Prostate gland (tissue), 2 donors: ENCODE measurements at regions of chr16 and their contacts with region 1.

Region 1: GRCh38 chr16:28946681-28947080 is 4.1 kb upstream of the NFATC2IP start:
- DNase-seq: no peak
- H3K4me3 ChIP-seq: no peak overlapping the region
- H3K27ac ChIP-seq: no peak overlapping the region
- H3K4me1 ChIP-seq: no peaks in the 10 kb centered on the region
- H3K27me3 ChIP-seq: no peaks in the 10 kb centered on the region
- CTCF ChIP-seq: no peak
- POLR2A ChIP-seq: no peak

Region 2: DNA sequence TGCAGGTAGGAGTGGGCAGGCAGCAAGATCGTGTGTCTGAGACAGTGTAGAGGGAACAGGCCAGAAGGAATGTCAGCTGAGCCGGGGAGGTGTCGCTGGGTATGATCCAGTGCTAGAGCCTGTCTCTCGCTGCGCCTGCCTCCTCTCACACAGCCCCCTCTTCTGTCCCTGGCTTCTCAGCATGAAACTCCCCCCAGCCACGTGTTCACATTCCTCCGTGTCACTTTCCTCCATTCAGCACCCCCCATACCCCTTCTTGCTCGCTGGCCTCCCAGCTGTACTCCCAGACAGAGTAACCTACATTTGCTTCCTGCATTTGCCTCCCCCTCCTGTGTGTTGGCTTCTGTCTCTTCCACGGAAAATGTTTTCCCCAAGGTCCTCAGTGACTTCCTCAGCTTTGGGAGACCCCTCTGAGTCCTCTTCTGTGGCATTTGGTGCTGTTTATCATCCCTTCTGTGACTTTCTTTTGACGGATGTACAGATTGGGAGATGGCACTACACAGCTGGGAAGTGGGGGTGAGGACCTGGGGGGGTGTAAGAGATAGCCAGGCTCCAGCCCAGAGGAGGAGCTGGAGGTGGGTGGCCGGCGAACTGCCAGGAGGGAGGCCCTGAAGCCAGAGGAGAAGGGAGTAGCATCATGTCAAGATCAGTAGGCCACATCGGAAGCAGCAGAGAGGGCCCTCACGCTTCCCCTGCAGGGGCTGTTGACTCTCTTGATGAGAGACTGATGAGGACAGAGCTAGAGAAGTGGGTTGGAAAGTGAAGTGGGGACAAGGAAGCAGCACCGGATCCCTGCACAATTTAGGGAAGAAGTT is 373.8 kb before region 1 on chr16:
- intact Hi-C with region 1: no loop called
- DNase-seq: no peak
- H3K4me3 ChIP-seq: no peak overlapping the region
- H3K27ac ChIP-seq: no peak overlapping the region
- H3K4me1 ChIP-seq: no peaks in the 10 kb centered on the region
- H3K27me3 ChIP-seq: no peaks in the 10 kb centered on the region
- CTCF ChIP-seq: no peak
- POLR2A ChIP-seq: no peak

Region 3: GRCh38 chr16:28823872-28824716 is 122.6 kb before region 1 on chr16:
- intact Hi-C with region 1: loop called (anchors 5 kb)
- DNase-seq: peak; percentile 95
- H3K4me3 ChIP-seq: peak overlapping the region; percentile 96 to 100
- H3K27ac ChIP-seq: peak overlapping the region; percentile 98 to 99
- H3K4me1 ChIP-seq: peaks cover 8% of the 10 kb centered on the region
- H3K27me3 ChIP-seq: no peaks in the 10 kb centered on the region
- CTCF ChIP-seq: peak in 2 of 4 experiments; percentile 44 to 68
- POLR2A ChIP-seq: peak; percentile 57

Region 4: DNA sequence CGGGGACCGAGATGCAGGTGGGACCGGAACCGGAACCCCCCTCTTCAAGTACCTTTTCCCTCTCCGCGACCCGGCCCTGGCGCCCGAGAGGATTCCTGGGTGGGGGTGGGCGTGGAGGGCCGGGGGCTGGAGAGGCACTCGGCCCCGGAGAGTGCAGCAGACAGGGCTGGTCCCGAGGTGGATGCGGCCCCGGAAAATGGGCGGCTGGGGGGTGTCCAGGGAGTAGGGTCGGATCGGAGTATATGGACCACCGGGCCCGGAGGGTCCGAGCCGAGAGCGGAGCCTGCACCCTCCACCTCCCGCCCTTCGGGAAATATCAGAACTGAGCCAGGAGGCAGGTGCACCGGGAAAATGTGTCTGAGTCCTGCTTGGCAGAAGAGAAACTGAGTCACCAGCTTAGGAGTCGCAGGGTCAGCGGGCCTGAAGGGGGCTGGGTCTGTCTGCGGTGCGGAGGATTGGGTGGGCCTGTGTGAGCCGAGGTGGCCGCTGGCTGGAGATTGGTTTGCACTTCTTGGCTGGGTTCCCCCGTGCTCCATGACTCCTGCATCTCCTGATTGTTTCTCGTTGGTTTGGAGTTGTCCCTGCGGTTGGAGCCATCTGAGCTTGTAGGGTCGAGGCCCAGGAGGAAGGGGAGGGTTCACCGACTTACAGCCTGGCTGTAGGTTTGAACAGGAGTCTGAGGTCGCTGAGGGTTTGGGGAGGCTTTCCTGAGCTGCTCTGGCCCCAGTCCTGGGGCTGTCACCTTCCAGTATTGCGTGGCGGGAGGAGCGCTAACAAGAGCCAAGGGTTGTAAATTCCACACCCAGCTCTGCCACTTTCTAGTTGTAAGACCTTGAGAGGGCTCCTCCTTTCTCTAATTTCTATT is 82.5 kb before region 1 on chr16:
- intact Hi-C with region 1: loop called (anchors 5 kb)
- DNase-seq: no peak
- H3K4me3 ChIP-seq: peak overlapping the region; percentile 84 to 85
- H3K27ac ChIP-seq: peak overlapping the region; percentile 81 to 86
- H3K4me1 ChIP-seq: no peaks in the 10 kb centered on the region
- H3K27me3 ChIP-seq: no peaks in the 10 kb centered on the region
- CTCF ChIP-seq: no peak
- POLR2A ChIP-seq: no peak